Calu3 (cell line): ENCODE measurements at regions of chr1 and their contacts with region 1.

Region 1: GRCh38 chr1:116817582-116818064 is 63.4 kb downstream of the CD2 start:
- DNase-seq: peak; percentile 79
- H3K4me3 Mint-ChIP-seq: no peak overlapping the region
- H3K27ac Mint-ChIP-seq: no peak overlapping the region
- H3K4me1 Mint-ChIP-seq: no peaks in the 10 kb centered on the region
- H3K27me3 Mint-ChIP-seq: no peaks in the 10 kb centered on the region
- CTCF ChIP-seq: peak; percentile 83

Region 2: GRCh38 chr1:116737020-116737854 is 80.4 kb before region 1 on chr1:
- CTCF ChIA-PET with region 1: interaction called, 9 read pairs
- intact Hi-C with region 1: loop called (anchors 1 kb)
- DNase-seq: peak; percentile 57
- H3K4me3 Mint-ChIP-seq: no peak overlapping the region
- H3K27ac Mint-ChIP-seq: no peak overlapping the region
- H3K4me1 Mint-ChIP-seq: no peaks in the 10 kb centered on the region
- H3K27me3 Mint-ChIP-seq: peaks cover 20% of the 10 kb centered on the region
- CTCF ChIP-seq: peak; percentile 61

Region 3: DNA sequence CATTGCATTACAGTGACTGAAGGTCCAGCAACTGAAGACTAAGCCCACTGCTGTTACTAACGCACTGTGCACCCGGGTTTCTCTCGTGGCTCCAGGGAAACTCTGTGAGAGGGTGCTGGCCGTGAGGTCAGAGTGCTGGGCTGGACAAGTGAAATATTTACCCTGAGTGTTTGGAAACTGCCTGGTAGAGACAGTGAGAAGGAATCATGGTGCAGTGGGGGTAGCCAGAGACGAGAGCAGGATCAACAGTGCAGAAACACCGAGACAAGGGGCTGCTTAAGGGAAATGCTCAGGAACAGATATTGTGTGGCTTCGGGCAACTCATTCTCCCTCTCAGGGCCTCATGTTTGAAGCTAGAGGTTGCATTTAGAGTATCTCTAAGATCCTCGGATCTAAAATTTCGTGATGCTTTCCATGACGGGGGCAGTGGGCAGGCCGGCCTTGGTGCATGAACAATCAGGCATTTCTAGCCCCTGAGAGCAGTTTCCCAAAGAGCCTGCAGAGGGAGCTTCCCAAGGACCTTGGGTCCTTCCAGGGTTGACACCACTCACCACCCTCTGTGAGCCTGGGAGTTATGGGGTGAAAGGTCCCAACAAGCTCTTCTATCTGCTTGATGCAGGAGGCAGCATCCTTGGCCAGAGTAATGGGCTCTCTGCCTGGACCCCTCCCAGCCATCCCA is 53.7 kb before region 1 on chr1:
- CTCF ChIA-PET with region 1: no interaction called
- intact Hi-C with region 1: loop called (anchors 10 kb)
- DNase-seq: peak; percentile 18
- H3K4me3 Mint-ChIP-seq: no peak overlapping the region
- H3K27ac Mint-ChIP-seq: no peak overlapping the region
- H3K4me1 Mint-ChIP-seq: no peaks in the 10 kb centered on the region
- H3K27me3 Mint-ChIP-seq: no peaks in the 10 kb centered on the region
- CTCF ChIP-seq: no peak

Region 4: GRCh38 chr1:117128323-117129079 is 310.9 kb after region 1 on chr1:
- CTCF ChIA-PET with region 1: no interaction called
- intact Hi-C with region 1: no loop called
- DNase-seq: no peak
- H3K4me3 Mint-ChIP-seq: no peak overlapping the region
- H3K27ac Mint-ChIP-seq: no peak overlapping the region
- H3K4me1 Mint-ChIP-seq: peaks cover 11% of the 10 kb centered on the region
- H3K27me3 Mint-ChIP-seq: no peaks in the 10 kb centered on the region
- CTCF ChIP-seq: peak; percentile 19